ENCODE measurements at regions of chr3 and their contacts with region 1.

Region 1: GRCh38 chr3:171690281-171690680 is 120.0 kb downstream of the PLD1 start:
- DNase-seq: peak; percentile 21
- ATAC-seq: peak; percentile 74
- H3K4me3 ChIP-seq: no peak overlapping the region
- H3K27ac ChIP-seq: peak overlapping the region; percentile 23
- H3K4me1 ChIP-seq: peaks cover 3% of the 10 kb centered on the region; the same call in 1 of the 2 replicates
- H3K27me3 ChIP-seq: no peaks in the 10 kb centered on the region
- CTCF ChIP-seq: no peak
- EP300 ChIP-seq: no peak
- POLR2A ChIP-seq: no peak
- RAD21 ChIP-seq: no peak

Region 2: DNA sequence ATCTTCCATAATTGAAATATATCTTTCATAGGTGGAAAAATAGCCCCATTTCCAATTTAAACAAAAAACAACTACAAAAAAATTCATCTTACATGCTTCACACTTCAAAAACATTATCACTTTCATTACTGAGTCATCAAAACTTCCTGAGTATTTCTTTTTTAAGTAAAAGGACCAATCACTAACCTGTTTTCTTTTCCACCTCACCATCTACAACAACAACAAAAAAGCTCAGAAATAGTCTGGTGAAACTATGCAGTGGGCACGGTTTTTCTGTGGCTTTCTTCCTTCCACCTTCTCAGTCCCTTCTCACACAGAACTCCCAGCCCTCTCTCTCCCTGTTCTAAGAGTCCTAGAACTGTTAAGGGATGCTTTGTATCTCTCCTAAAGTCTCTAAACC is 209.8 kb before region 1 on chr3:
- CTCF ChIA-PET with region 1: no interaction called
- POLR2A ChIA-PET with region 1: no interaction called
- RAD21 ChIA-PET with region 1: no interaction called
- SMC1A ChIA-PET with region 1: no interaction called
- in situ Hi-C with region 1: no loop called
- intact Hi-C with region 1: no loop called
- DNase-seq: peak; percentile 54
- ATAC-seq: peak; percentile 92
- H3K4me3 ChIP-seq: peak overlapping the region; percentile 1; the same call in 1 of the 2 replicates
- H3K27ac ChIP-seq: peak overlapping the region; percentile 40; the same call in 1 of the 2 replicates
- H3K4me1 ChIP-seq: peaks cover 11% of the 10 kb centered on the region
- H3K27me3 ChIP-seq: no peaks in the 10 kb centered on the region
- CTCF ChIP-seq: no peak
- EP300 ChIP-seq: no peak
- POLR2A ChIP-seq: no peak
- RAD21 ChIP-seq: no peak

Region 3: DNA sequence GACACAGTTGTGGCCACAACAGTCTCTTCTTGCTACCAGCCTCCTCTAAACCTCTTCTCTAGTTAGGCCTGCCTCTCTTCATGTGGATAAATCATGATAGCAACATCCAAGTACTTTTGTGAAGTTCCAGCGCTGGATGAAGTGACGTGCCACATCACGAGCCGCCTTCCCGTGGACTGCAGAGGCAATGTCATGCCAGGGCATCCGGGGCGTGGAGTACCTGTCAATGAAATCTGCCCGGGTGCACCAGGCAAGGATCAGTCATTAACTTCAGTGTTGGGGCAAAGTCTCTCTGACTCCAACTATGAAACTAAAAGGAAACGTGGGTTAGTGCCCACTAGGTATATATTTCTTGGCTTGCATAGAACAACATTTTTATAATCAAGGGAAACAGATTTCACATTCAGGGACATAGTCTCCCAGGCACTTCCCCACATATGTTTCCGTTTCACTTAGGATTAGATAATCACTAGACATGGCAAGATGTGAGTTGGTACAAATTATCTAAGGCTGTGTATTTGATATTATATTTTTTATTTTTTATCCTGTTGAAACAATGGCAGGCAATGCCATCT is 13.6 kb before region 1 on chr3:
- CTCF ChIA-PET with region 1: interaction called, 6 read pairs
- POLR2A ChIA-PET with region 1: no interaction called
- RAD21 ChIA-PET with region 1: interaction called, 4 read pairs
- SMC1A ChIA-PET with region 1: interaction called, 20 read pairs
- in situ Hi-C with region 1: no loop called
- intact Hi-C with region 1: no loop called
- DNase-seq: no peak
- ATAC-seq: no peak
- H3K4me3 ChIP-seq: no peak overlapping the region
- H3K27ac ChIP-seq: no peak overlapping the region
- H3K4me1 ChIP-seq: no peaks in the 10 kb centered on the region
- H3K27me3 ChIP-seq: no peaks in the 10 kb centered on the region; a peak in 1 of 4 replicates
- CTCF ChIP-seq: no peak
- EP300 ChIP-seq: no peak
- POLR2A ChIP-seq: no peak
- RAD21 ChIP-seq: no peak

Region 4: GRCh38 chr3:171703756-171704401 is 13.6 kb after region 1 on chr3:
- CTCF ChIA-PET with region 1: interaction called, 5 read pairs
- POLR2A ChIA-PET with region 1: no interaction called
- RAD21 ChIA-PET with region 1: interaction called, 3 read pairs
- SMC1A ChIA-PET with region 1: interaction called, 12 read pairs
- in situ Hi-C with region 1: no loop called
- intact Hi-C with region 1: no loop called
- DNase-seq: no peak
- ATAC-seq: peak; percentile 74
- H3K4me3 ChIP-seq: no peak overlapping the region
- H3K27ac ChIP-seq: no peak overlapping the region
- H3K4me1 ChIP-seq: no peaks in the 10 kb centered on the region
- H3K27me3 ChIP-seq: no peaks in the 10 kb centered on the region; a peak in 1 of 4 replicates
- CTCF ChIP-seq: peak; percentile 24 to 63 (median 41); a peak in 4 of 6 replicates
- EP300 ChIP-seq: no peak
- POLR2A ChIP-seq: no peak
- RAD21 ChIP-seq: peak; percentile 55